ENCODE measurements at regions of chr4 and their contacts with region 1.

Region 1: DNA sequence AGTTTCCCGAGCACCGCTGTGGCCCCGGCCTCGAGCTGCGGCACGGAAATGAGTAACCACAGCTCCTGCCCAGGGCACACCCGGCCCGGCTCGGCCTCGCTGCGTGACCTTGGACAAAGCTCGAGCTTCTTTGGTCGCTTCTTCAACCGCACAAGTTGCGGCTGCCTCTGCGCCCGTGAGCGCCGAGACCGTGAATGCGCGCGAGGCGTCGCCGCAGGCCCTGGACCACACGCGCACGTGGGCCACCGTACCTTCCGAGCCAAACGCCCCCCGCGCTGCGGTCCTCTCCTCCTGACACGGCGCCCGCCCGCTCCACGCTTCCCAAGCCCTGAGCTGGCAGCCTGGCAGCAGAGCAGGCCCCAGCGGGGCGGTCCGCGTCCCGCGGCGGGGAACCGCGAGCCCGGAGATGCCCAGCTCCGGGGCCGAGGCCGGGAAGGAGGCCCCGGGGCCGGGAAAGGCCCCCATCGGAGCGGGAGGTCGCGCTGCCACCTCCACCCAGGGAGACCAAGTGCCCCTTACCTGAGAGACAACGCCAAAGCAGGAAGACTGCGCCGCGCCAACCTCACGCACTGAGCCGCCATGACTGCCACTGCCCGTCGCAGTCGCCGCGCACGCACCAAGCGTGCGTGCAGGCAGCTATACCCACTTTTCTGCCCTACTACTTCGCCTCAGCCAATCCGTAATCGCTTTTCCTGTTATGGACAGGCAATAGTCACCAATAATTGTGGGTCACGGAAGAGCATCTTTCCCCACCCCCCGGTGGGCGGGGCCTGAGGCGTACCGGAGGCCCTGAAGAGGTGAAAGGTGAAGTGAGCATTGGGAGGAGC is at the start of gene GRPEL1:
- DNase-seq: peak in 1 of 2 experiments; percentile 98
- H3K4me3 ChIP-seq: peak within 1 kb of the TSS; percentile 76 to 93 (median 80)
- H3K27ac ChIP-seq: peak within 1 kb of the TSS; percentile 38; the same call in 1 of the 2 replicates
- H3K4me1 ChIP-seq: peaks cover 2 to 6% (median 3%) of the 10 kb centered on the region in 4 experiments; a peak in 2 of 7 replicates
- H3K27me3 ChIP-seq: peaks cover 0 to 17% (median 10%) of the 10 kb centered on the region in 4 experiments; a peak in 6 of 7 replicates
- CTCF ChIP-seq: no peak
- EP300 ChIP-seq: no peak
- POLR2A ChIP-seq: peak in 1 of 2 experiments; percentile 89; a peak in 2 of 3 replicates
- RAD21 ChIP-seq: no peak
- total RNA-seq, gene GRPEL1: 39.9 and 43.0 TPM in 2 replicates

Region 2: GRCh38 chr4:6802025-6802424 is 265.6 kb before region 1 on chr4:
- CTCF ChIA-PET with region 1: no interaction called
- POLR2A ChIA-PET with region 1: no interaction called
- DNase-seq: no peak
- H3K4me3 ChIP-seq: no peak overlapping the region
- H3K27ac ChIP-seq: no peak overlapping the region
- H3K4me1 ChIP-seq: peaks cover 0 to 4% (median 1%) of the 10 kb centered on the region in 4 experiments; a peak in 2 of 7 replicates
- H3K27me3 ChIP-seq: no peaks in the 10 kb centered on the region
- CTCF ChIP-seq: no peak
- EP300 ChIP-seq: no peak
- POLR2A ChIP-seq: no peak
- RAD21 ChIP-seq: no peak

Region 3: DNA sequence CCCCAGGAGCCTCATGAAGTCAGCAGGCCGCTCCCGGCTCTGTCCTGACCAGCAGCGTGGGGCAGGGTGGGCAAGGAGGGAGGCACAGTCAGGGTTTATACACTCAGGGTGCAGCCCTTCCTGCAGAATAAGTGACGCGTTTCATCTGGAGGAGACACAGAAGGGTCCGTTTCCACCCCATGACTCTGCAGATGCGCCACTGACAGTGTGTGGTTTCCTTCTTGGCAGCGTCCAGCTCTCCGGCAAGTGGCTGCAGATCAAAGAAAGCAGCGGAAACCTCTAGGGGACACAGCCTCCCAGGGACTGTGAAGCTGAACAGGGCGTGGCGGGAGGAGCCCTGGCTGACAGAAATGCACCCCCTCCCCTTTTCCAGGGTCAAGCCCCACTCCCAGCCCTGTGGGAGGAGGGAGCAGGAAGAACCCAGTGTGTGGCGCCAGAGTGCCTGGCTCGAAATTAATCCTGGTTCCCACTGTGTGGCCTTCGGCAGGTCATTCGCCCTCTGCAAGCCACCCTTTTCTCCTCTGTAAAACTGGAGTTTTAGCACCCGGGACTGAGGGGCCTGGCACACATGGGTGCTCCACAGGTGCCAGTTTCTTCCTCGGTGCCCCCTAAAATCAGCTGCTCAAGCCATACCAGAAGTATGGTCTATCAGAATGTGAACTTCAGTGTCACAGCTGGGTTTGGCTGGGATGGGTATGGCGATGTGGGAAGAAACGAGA is 175.3 kb before region 1 on chr4:
- CTCF ChIA-PET with region 1: interaction called, 10 read pairs
- POLR2A ChIA-PET with region 1: no interaction called
- DNase-seq: no peak
- H3K4me3 ChIP-seq: no peak overlapping the region
- H3K27ac ChIP-seq: no peak overlapping the region
- H3K4me1 ChIP-seq: no peaks in the 10 kb centered on the region; a peak in 1 of 7 replicates
- H3K27me3 ChIP-seq: no peaks in the 10 kb centered on the region
- CTCF ChIP-seq: peak; percentile 26 to 60 (median 48); a peak in 3 of 4 replicates
- EP300 ChIP-seq: no peak
- POLR2A ChIP-seq: no peak
- RAD21 ChIP-seq: peak; percentile 54 to 63; a peak in 3 of 4 replicates

Region 4: GRCh38 chr4:6974138-6974848 is 93.4 kb before region 1 on chr4:
- CTCF ChIA-PET with region 1: interaction called, 8 read pairs
- POLR2A ChIA-PET with region 1: interaction called, 10 read pairs
- DNase-seq: peak; percentile 87 to 95
- H3K4me3 ChIP-seq: no peak overlapping the region
- H3K27ac ChIP-seq: 0 out of 2 replicates have a peak overlapping the region, but pooled peaks have one; percentile 8
- H3K4me1 ChIP-seq: peaks cover 15 to 23% (median 19%) of the 10 kb centered on the region in 4 experiments; a peak in 6 of 7 replicates
- H3K27me3 ChIP-seq: no peaks in the 10 kb centered on the region
- CTCF ChIP-seq: peak; percentile 73 to 98 (median 75)
- EP300 ChIP-seq: no peak
- POLR2A ChIP-seq: no peak
- RAD21 ChIP-seq: peak; percentile 58 to 77

Region 5: DNA sequence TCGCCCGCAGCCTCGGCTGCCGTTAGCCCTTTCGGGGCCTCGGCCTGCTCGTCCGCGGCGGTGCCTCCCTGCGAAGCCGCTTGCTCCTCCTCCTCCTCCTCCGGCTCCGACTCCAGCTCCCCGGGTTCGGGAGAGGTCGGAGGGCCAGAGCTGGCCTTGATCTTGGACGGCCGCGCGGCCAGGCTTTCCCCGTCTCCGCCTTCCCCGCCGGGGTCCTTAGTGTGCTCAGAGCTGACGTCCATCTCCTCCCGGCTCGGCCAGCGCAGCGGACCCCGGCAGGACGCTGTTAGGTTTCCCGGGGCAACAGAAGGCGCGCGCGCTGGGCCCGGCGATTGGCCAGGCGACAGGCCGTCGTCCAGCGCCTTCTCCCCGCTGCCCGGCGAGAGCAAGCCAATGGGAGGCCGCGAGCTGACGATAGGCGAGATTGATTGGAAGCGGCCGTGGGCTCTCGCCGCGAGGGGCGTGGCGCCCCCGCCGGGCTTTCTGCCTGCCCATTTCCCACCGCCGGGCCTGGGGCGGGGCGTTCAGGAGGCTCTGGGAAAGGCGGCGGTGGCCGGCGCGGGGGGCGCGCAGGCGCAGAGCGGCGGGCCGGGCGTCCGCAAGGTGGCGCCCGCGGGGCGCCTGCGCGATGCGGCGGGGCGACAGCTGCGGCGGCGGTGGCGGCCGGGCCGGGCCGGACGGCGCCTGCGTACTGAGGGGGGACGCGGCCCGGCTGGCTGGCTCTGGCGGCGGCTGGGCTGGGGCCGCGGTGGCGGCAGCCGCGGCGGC is 24.8 kb before region 1 on chr4 and contains the start of gene TADA2B:
- CTCF ChIA-PET with region 1: interaction called, 108 read pairs
- POLR2A ChIA-PET with region 1: interaction called, 8 read pairs
- DNase-seq: peak; percentile 92 to 96
- H3K4me3 ChIP-seq: peak within 1 kb of the TSS; percentile 74 to 92 (median 89)
- H3K27ac ChIP-seq: peak within 1 kb of the TSS; percentile 23; the same call in 1 of the 2 replicates
- H3K4me1 ChIP-seq: peaks cover 0 to 15% (median 8%) of the 10 kb centered on the region in 4 experiments; a peak in 5 of 7 replicates
- H3K27me3 ChIP-seq: peaks cover 11 to 29% (median 20%) of the 10 kb centered on the region in 4 experiments
- CTCF ChIP-seq: peak in 2 of 3 experiments; percentile 37 to 56; a peak in 3 of 4 replicates
- EP300 ChIP-seq: no peak
- POLR2A ChIP-seq: no peak
- RAD21 ChIP-seq: no peak
- total RNA-seq, gene TADA2B: 12.1 and 12.3 TPM in 2 replicates

Region 6: GRCh38 chr4:7081891-7082471 is 14.3 kb after region 1 on chr4:
- CTCF ChIA-PET with region 1: interaction called, 90 read pairs
- POLR2A ChIA-PET with region 1: interaction called, 4 read pairs
- DNase-seq: peak in 1 of 2 experiments; percentile 75
- H3K4me3 ChIP-seq: no peak overlapping the region
- H3K27ac ChIP-seq: no peak overlapping the region
- H3K4me1 ChIP-seq: no peaks in the 10 kb centered on the region; a peak in 1 of 7 replicates
- H3K27me3 ChIP-seq: peaks cover 0 to 14% (median 6%) of the 10 kb centered on the region in 4 experiments; a peak in 4 of 7 replicates
- CTCF ChIP-seq: peak; percentile 76 to 85 (median 78)
- EP300 ChIP-seq: no peak
- POLR2A ChIP-seq: no peak
- RAD21 ChIP-seq: peak; percentile 89 to 93

Measured in H1 (cell line).